ENCODE measurements at regions of chr1 and their contacts with region 1.

Region 1: DNA sequence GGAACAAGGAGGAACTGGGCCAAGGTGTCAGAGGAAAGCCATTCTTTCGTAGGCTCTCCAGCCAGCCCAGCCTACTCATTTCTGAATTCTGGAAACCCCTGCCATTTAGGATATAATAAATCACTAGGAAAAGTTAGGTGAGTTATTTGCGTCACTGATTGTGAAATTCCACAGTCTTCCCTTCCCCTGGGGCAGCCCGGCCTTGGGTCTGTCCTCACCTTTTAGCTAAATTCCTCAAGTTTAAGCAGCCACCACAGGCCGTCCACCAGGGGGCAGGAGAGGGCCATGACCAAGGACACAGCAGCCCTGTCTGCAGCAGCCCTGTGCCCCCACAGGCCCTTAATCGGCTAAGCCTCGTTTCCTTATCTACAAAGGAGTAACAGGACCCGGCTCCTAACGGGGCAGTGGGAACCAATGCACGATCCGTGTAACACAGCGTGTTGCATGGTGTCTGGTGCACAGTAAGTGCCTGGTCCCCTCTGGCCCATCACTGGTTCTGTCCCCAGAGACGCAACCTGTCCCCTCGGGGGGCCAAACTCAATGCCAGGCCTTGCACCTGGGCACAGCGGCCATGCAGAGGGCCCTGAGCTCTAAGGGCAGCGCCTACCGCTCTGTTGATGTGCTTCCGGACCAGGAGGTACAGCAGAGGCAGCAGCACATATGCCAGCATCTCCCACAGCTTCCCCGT is 18.1 kb downstream of the GPR157 start:
- DNase-seq: no peak
- ATAC-seq: peak; percentile 94
- H3K4me3 ChIP-seq: no peak overlapping the region
- H3K27ac ChIP-seq: no peak overlapping the region
- H3K4me1 ChIP-seq: peaks cover 19% of the 10 kb centered on the region
- H3K27me3 ChIP-seq: no peaks in the 10 kb centered on the region
- CTCF ChIP-seq: peak; percentile 87 to 93 (median 91)
- EP300 ChIP-seq: no peak
- POLR2A ChIP-seq: no peak
- RAD21 ChIP-seq: peak; percentile 98

Region 2: DNA sequence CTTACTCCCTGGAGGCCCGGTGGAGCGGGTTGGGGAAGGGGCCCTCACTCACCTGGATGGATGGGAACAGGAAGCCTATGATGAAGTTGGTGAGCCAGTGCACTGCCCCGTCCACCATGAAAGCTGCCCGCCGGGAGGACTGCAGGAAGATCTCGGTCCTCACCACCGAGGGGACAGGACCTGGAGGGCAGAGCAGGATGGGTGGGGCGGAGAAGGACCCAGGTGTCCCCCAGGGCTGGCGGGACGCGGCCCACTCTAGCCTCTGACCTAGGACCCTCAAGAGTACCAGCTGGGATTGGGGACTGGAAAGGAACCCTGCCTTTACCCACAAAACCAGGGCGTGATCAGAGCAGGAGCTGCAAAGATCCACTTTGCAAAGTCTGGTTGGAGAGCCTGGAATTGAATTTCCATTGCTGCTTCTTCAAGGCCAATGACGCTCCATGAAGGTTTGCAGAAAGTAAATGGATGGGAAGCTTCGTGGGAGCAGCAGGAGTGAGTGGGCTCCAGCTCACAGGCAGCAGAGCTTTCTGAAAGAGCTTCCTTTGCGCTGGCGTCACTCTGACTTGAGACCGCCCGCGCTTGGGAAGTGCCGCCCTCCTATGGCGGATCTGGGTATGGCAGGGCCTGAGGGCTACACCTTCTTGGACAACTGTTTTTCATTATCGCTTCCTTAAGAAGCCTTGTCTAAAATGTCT is 106.0 kb before region 1 on chr1:
- CTCF ChIA-PET with region 1: interaction called, 22 read pairs
- POLR2A ChIA-PET with region 1: no interaction called
- RAD21 ChIA-PET with region 1: interaction called, 5 read pairs
- SMC1A ChIA-PET with region 1: interaction called, 5 read pairs
- in situ Hi-C with region 1: no loop called
- intact Hi-C with region 1: no loop called
- DNase-seq: no peak
- ATAC-seq: peak; percentile 73
- H3K4me3 ChIP-seq: no peak overlapping the region
- H3K27ac ChIP-seq: no peak overlapping the region
- H3K4me1 ChIP-seq: peaks cover 22% of the 10 kb centered on the region
- H3K27me3 ChIP-seq: no peaks in the 10 kb centered on the region
- CTCF ChIP-seq: peak; percentile 89 to 97 (median 97)
- EP300 ChIP-seq: no peak
- POLR2A ChIP-seq: no peak
- RAD21 ChIP-seq: peak; percentile 82

Region 3: GRCh38 chr1:9128520-9129265 is 17.9 kb after region 1 on chr1 and contains the start of gene GPR157:
- CTCF ChIA-PET with region 1: interaction called, 13 read pairs
- POLR2A ChIA-PET with region 1: no interaction called
- RAD21 ChIA-PET with region 1: interaction called, 14 read pairs
- SMC1A ChIA-PET with region 1: interaction called, 14 read pairs
- in situ Hi-C with region 1: no loop called
- intact Hi-C with region 1: no loop called
- DNase-seq: no peak
- ATAC-seq: peak; percentile 81
- H3K4me3 ChIP-seq: peak within 1 kb of the TSS; percentile 85
- H3K27ac ChIP-seq: peak within 1 kb of the TSS; percentile 23
- H3K4me1 ChIP-seq: peaks cover 28% of the 10 kb centered on the region
- H3K27me3 ChIP-seq: no peaks in the 10 kb centered on the region
- CTCF ChIP-seq: peak in 2 of 3 experiments; percentile 8 to 26; a peak in 1 of 6 replicates
- EP300 ChIP-seq: no peak
- POLR2A ChIP-seq: peak; percentile 31; the same call in 1 of the 2 replicates
- RAD21 ChIP-seq: no peak
- polyA plus RNA-seq, gene GPR157: 0.66 to 1.1 TPM

Region 4: DNA sequence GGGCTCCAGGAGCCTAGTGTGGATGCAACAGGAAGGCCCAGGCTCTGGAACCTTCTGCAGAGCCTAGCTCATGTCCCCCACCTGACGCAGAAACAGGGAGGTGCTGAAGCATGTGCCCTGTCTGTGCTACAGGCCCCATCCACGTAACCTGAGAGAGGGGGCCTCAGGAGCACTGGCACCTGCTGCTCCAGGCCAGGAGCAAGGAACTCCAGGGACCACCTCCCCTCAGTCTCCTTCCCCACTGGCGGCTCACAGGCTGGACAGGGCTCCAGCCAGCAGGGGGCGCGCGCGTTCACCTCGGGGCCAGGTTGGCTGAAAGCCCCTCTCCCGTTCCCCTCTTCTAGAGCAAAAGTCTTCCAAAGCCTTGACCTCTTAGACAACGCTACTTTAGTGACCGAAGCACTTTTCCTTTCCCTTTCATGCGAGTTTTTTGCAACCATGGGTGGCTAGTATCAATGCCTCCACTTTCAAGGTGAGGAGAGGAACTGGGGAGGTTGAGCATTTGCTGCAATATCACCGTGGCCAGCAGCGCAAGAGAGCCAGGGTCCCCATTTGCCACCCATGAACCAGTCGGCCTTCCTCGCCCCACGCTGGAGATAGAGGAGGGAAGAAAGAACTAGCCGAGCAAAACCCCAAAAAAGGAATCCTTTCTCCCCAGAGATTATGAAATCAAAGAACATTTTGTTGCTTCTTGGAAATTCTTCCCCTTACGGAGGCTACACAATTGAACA is 70.5 kb after region 1 on chr1:
- CTCF ChIA-PET with region 1: interaction called, 24 read pairs
- POLR2A ChIA-PET with region 1: interaction called, 8 read pairs
- RAD21 ChIA-PET with region 1: interaction called, 18 read pairs
- SMC1A ChIA-PET with region 1: interaction called, 13 read pairs
- in situ Hi-C with region 1: no loop called
- intact Hi-C with region 1: no loop called
- DNase-seq: peak; percentile 43
- ATAC-seq: peak; percentile 75
- H3K4me3 ChIP-seq: peak overlapping the region; percentile 90
- H3K27ac ChIP-seq: peak overlapping the region; percentile 84
- H3K4me1 ChIP-seq: peaks cover 17% of the 10 kb centered on the region
- H3K27me3 ChIP-seq: no peaks in the 10 kb centered on the region
- CTCF ChIP-seq: peak; percentile 93 to 98 (median 97); a peak in 5 of 6 replicates
- EP300 ChIP-seq: no peak
- POLR2A ChIP-seq: peak; percentile 56; the same call in 1 of the 2 replicates
- RAD21 ChIP-seq: peak; percentile 23; the same call in 1 of the 2 replicates

Region 5: GRCh38 chr1:9201401-9202239 is 90.8 kb after region 1 on chr1:
- CTCF ChIA-PET with region 1: interaction called, 117 read pairs
- POLR2A ChIA-PET with region 1: interaction called, 6 read pairs
- RAD21 ChIA-PET with region 1: interaction called, 59 read pairs
- SMC1A ChIA-PET with region 1: interaction called, 43 read pairs
- in situ Hi-C with region 1: loop called (anchors 5 kb)
- intact Hi-C with region 1: loop called (anchors 1 kb)
- DNase-seq: no peak
- ATAC-seq: peak; percentile 37
- H3K4me3 ChIP-seq: peak overlapping the region; percentile 20; the same call in 1 of the 2 replicates
- H3K27ac ChIP-seq: no peak overlapping the region
- H3K4me1 ChIP-seq: peaks cover 48% of the 10 kb centered on the region
- H3K27me3 ChIP-seq: peaks cover 0 to 32% of the 10 kb centered on the region in 2 experiments; a peak in 3 of 4 replicates
- CTCF ChIP-seq: no peak
- EP300 ChIP-seq: no peak
- POLR2A ChIP-seq: no peak
- RAD21 ChIP-seq: no peak

Region 6: DNA sequence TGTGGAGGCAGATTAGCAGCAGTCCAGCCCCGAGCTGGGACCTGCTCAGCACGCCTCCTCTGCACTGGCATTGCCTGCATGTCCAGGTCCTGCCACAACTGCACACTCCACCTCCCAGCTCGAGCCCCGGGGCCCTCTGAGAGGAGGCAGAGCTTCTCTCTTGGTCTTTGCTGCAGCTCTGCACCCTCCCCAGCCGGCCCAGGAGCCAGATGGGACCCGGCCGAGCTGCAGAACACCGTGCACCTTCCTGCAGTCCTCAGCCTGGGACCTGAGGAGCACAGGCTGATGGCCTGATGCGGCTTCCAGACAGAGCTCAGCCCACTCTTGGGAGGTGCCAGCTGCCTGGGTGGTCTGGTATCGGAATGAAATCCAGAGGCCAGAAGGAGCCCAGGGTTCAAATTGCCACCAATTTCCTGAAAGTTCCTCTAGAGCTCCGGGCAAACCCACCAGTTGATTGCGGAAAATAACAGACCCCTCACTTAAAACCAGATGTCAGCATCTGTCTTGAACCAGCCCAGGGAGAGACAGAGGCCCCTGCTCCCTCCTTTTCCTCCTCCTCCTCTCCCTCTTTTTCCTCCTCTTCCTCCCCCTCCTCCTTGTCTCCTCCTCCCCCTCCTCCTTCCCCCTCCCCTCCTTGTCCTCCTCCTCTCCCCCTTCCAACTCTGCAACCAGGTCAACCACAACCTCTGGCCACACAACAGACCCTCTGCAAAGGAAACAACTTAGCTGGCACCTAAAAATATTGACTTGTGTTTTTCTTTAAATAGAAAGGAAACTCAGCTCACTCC is 171.3 kb after region 1 on chr1:
- CTCF ChIA-PET with region 1: no interaction called
- POLR2A ChIA-PET with region 1: no interaction called
- RAD21 ChIA-PET with region 1: no interaction called
- SMC1A ChIA-PET with region 1: interaction called, 3 read pairs
- in situ Hi-C with region 1: no loop called
- intact Hi-C with region 1: loop called (anchors 2 kb)
- DNase-seq: no peak
- ATAC-seq: peak; percentile 31
- H3K4me3 ChIP-seq: no peak overlapping the region
- H3K27ac ChIP-seq: no peak overlapping the region
- H3K4me1 ChIP-seq: peaks cover 6% of the 10 kb centered on the region
- H3K27me3 ChIP-seq: no peaks in the 10 kb centered on the region
- CTCF ChIP-seq: no peak
- EP300 ChIP-seq: no peak
- POLR2A ChIP-seq: no peak
- RAD21 ChIP-seq: no peak

Region 7: DNA sequence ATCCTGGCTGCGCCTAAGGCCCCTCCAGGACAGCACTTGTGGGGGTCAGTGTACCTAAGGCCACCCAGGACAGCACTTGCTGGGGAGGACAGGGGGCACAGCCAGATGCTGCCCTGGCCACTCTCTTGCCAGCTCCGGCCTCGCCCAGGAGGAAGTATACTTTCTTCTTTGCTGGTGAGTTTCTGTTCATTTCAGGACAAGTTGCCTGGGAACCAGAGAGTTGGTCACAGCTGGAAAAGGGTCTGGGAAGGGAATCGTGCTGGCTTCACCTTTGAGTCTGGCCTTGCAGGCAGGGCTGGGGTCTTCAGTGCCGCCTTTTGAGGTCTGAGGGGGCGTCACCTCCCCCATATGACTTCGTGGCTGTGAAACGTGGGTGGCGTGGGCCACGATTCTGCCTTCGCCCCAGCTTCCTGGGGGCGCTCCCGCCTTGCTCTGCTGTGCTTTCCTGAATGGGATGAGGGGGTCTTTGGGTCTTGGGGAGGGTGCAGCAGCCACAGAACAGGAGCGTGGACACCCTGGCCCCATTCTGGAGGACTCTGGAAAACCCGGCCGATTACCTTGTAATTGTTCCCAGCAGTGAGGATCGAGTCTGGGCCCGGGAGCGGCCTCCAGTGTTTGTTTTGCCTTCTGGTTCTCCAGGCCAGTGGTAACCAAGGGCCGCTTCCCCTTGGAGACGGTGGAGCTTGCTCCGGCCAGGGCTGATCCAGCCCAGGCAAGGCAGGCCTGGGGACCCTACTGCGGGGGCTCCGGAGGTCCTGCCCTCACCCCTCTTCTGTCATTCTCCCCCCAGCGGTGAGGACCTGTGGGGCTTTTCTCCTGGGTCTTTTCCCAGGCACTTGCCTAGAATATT is 227.8 kb after region 1 on chr1:
- CTCF ChIA-PET with region 1: no interaction called
- POLR2A ChIA-PET with region 1: no interaction called
- RAD21 ChIA-PET with region 1: no interaction called
- SMC1A ChIA-PET with region 1: no interaction called
- in situ Hi-C with region 1: no loop called
- intact Hi-C with region 1: no loop called
- DNase-seq: no peak
- ATAC-seq: no peak
- H3K4me3 ChIP-seq: no peak overlapping the region
- H3K27ac ChIP-seq: no peak overlapping the region
- H3K4me1 ChIP-seq: no peaks in the 10 kb centered on the region
- H3K27me3 ChIP-seq: no peaks in the 10 kb centered on the region; a peak in 1 of 4 replicates
- CTCF ChIP-seq: no peak
- EP300 ChIP-seq: no peak
- POLR2A ChIP-seq: no peak
- RAD21 ChIP-seq: no peak